CD4-positive, alpha-beta T cell (primary cell): ENCODE measurements at regions of chr6 and their contacts with region 1.

Region 1: DNA sequence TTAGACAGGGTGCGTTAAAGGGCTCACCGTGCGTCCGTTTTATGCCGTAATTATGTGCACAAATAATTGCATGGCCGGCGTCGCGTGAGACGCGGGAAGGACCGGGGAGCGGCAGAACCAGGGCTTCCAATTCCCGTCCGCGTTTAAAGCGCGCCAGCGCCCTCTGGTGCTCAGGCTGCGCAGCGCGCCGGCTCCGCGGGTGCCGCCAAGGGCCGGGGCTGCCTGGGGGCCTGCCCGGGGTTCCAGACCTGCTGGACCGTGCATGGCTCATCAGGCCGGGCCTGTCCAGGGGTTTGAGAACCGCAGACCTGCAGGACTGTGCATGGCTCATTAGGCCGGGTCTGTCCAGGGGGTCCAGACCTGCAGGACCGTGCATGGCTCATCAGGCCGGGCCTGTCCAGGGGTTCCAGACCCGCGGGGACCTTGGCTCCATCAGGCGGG is 369.0 kb downstream of the THBS2 start:
- DNase-seq: peak; percentile 54 to 86 (median 76)
- ATAC-seq: peak; percentile 92
- H3K4me3 ChIP-seq: peak overlapping the region; percentile 54
- H3K4me3 Mint-ChIP-seq: peak overlapping the region; percentile 88
- H3K27ac ChIP-seq: peak overlapping the region in 1 of 2 donors; percentile 14
- H3K27ac Mint-ChIP-seq: peak overlapping the region; percentile 89
- H3K4me1 ChIP-seq: peaks cover 18% of the 10 kb centered on the region
- H3K4me1 Mint-ChIP-seq: peaks cover 11% of the 10 kb centered on the region
- H3K27me3 ChIP-seq: peaks cover 0 to 2% of the 10 kb centered on the region in 2 experiments
- H3K27me3 Mint-ChIP-seq: no peaks in the 10 kb centered on the region
- CTCF ChIP-seq: peak; percentile 93

Region 2: GRCh38 chr6:168370310-168370991 is 514.2 kb before region 1 on chr6:
- CTCF ChIA-PET with region 1: no interaction called
- POLR2A ChIA-PET with region 1: interaction called, 3 read pairs
- intact Hi-C with region 1: loop called (anchors 1 kb)
- DNase-seq: peak in 13 of 14 experiments; percentile 33 to 71 (median 54)
- ATAC-seq: no peak
- H3K4me3 ChIP-seq: no peak overlapping the region
- H3K4me3 Mint-ChIP-seq: no peak overlapping the region
- H3K27ac ChIP-seq: no peak overlapping the region
- H3K27ac Mint-ChIP-seq: no peak overlapping the region
- H3K4me1 ChIP-seq: peaks cover 8% of the 10 kb centered on the region
- H3K4me1 Mint-ChIP-seq: peaks cover 5% of the 10 kb centered on the region
- H3K27me3 ChIP-seq: no peaks in the 10 kb centered on the region
- H3K27me3 Mint-ChIP-seq: no peaks in the 10 kb centered on the region
- CTCF ChIP-seq: peak; percentile 66